ENCODE measurements at regions of chr6 and their contacts with region 1.

Region 1: DNA sequence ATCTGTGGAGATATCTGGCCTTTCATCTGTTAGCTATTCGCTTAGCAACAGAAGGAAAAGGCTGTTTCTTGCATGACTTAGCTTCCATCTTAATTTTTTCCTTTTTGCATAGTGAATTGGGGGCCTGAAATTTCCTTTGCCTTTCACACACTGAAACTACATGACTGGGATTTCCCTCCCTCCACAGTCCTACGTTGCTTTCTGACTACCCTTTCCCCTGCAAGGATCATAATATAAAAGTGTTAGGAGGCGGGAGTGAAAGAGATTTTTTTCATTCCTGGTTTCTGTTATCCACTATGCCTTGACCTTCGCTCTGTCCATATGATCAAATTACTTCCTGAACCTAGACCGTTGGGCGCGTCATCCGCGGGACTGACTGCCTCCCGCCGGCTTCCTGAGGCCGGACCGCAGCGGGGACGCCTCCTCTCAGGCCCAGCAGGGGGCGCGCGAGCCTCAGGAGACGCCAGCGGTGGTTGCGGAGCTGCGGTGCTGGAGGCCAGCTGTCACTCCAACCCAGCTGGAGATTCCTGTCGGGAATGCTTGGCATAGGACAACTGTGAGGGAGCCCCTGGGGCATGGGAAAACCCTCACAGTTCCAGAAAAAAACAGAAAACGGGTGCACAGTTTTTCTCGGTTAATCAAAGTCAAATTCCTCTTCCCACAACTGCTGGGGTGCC is 55.6 kb downstream of the MEP1A start:
- DNase-seq: peak; percentile 94
- H3K4me3 Mint-ChIP-seq: peak overlapping the region; percentile 53
- H3K27ac Mint-ChIP-seq: peak overlapping the region; percentile 9
- H3K4me1 Mint-ChIP-seq: peaks cover 35% of the 10 kb centered on the region
- H3K27me3 Mint-ChIP-seq: no peaks in the 10 kb centered on the region
- CTCF ChIP-seq: peak; percentile 97

Region 2: DNA sequence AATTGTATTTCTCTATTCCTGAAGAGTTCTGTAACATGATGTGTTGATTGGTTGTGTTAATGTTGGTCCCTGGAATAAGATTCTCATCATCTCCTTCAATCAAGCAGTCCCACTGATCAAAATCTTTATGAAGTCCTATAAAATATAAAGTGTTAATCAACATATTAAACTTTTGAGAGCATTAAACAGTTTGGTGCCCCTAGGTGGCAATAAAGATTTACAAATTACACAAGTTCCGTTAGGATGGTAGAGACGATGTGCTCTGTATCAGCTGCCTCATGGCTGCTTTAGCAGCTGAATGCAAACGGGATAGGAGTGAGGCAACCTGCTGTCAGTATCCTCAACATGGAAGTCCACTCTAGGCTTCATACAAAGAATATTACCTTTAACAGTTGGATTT is 144.3 kb before region 1 on chr6:
- CTCF ChIA-PET with region 1: no interaction called
- intact Hi-C with region 1: loop called (anchors 2 kb)
- DNase-seq: peak; percentile 19
- H3K4me3 Mint-ChIP-seq: no peak overlapping the region
- H3K27ac Mint-ChIP-seq: no peak overlapping the region
- H3K4me1 Mint-ChIP-seq: no peaks in the 10 kb centered on the region
- H3K27me3 Mint-ChIP-seq: no peaks in the 10 kb centered on the region
- CTCF ChIP-seq: peak; percentile 34

Region 3: DNA sequence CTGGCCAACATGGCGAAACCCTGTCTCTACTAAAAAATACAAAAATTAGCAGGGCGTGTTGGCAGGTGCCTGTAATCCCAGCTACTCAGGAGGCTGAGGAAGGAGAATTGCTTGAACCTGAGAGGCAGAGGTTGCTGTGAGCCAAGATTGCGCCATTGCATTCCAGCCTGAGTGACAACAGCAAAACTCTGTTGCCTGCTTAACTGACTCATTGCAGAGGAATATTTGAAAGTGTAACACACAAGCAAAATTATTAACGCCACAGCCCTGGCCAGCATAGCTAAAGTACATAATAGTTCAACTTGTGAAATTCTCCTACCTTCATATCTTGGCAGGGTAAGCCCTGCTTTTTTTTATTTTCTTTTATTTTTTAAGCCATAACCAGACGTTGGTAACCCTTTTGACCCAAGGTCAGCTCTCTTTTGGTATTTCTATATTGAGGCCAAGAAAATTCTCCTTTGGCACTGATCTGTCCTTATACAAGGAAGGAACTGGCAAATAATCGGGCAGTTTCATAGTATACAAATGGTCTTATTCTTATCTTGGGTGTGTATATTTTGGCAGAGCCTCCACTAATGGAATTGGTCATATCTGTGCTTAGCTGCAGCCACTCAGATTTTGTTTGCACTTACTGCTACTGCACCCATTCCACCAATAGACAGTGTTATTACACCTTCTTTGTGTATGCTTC is 76.9 kb after region 1 on chr6:
- CTCF ChIA-PET with region 1: no interaction called
- intact Hi-C with region 1: loop called (anchors 2 kb)
- DNase-seq: peak; percentile 79
- H3K4me3 Mint-ChIP-seq: peak overlapping the region; percentile 19
- H3K27ac Mint-ChIP-seq: peak overlapping the region; percentile 88
- H3K4me1 Mint-ChIP-seq: peaks cover 64% of the 10 kb centered on the region
- H3K27me3 Mint-ChIP-seq: no peaks in the 10 kb centered on the region
- CTCF ChIP-seq: no peak

Region 4: GRCh38 chr6:46983007-46983411 is 134.2 kb after region 1 on chr6:
- CTCF ChIA-PET with region 1: interaction called, 10 read pairs
- intact Hi-C with region 1: loop called (anchors 2 kb)
- DNase-seq: peak; percentile 41
- H3K4me3 Mint-ChIP-seq: peak overlapping the region; percentile 26
- H3K27ac Mint-ChIP-seq: peak overlapping the region; percentile 86
- H3K4me1 Mint-ChIP-seq: peaks cover 57% of the 10 kb centered on the region
- H3K27me3 Mint-ChIP-seq: no peaks in the 10 kb centered on the region
- CTCF ChIP-seq: no peak

Region 5: GRCh38 chr6:46993846-46994245 is 145.0 kb after region 1 on chr6:
- CTCF ChIA-PET with region 1: interaction called, 11 read pairs
- intact Hi-C with region 1: loop called (anchors 1 kb)
- DNase-seq: peak; percentile 37
- H3K4me3 Mint-ChIP-seq: no peak overlapping the region
- H3K27ac Mint-ChIP-seq: peak overlapping the region; percentile 2
- H3K4me1 Mint-ChIP-seq: peaks cover 79% of the 10 kb centered on the region
- H3K27me3 Mint-ChIP-seq: no peaks in the 10 kb centered on the region
- CTCF ChIP-seq: no peak

Region 6: GRCh38 chr6:47309291-47310130 is 460.7 kb after region 1 on chr6 and contains the start of gene TNFRSF21:
- CTCF ChIA-PET with region 1: no interaction called
- intact Hi-C with region 1: loop called (anchors 5 kb)
- DNase-seq: peak; percentile 97
- H3K4me3 Mint-ChIP-seq: peak within 1 kb of the TSS; percentile 98
- H3K27ac Mint-ChIP-seq: peak within 1 kb of the TSS; percentile 96
- H3K4me1 Mint-ChIP-seq: peaks cover 31% of the 10 kb centered on the region
- H3K27me3 Mint-ChIP-seq: no peaks in the 10 kb centered on the region
- CTCF ChIP-seq: peak; percentile 85
- total RNA-seq, gene TNFRSF21: 255 and 282 TPM in 2 replicates

Measured in Calu3 (cell line).